Head of caudate nucleus (tissue), 42 donors: ENCODE measurements at regions of chr16 and their contacts with region 1.

Region 1: GRCh38 chr16:86563489-86564345 is 2.9 kb upstream of the FOXC2 start:
- DNase-seq: peak; percentile 80 to 96 (median 91)

Region 2: DNA sequence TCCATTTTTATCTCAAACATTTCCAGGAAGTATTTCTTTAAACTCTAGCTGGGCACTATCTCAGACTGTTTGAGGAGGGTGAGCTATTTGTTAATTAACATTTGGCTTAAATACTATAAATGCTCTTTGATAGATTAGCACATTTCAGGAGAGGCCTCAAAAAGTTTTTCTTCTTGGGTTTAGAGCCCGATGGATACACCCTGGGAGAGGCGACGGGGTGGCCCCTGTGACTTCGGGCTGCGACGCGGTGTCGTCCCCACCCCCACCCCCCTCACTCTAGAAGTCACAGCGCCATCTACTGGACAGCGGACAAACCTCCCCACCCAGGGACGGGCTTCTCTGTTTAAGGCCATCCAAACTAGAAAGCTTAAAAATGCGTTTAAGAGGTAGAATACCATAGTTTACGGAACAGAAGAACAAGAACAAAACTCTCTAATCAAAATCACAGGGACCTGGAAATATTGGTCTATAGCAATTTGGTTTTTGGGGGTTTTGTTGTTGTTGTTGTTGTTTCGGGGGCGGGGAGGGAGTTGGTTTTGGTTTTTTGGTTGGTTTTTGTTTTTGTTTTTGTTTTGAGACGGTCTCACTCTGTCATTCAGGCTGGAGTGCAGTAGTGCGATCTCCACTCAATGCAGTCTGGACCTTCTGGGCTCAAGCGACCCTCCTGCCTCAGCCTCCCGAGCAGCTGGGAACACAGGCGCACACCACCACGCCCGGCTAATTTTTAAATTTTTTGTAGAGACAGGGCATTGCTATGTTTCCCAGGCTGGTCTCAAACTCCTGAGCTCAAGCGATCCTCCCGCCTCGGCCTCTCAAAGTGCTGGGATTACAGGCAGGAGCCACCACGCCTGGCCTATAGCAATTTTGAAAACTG is 499.1 kb after region 1 on chr16:
- intact Hi-C with region 1: loop called (anchors 5 kb)
- DNase-seq: peak; percentile 36 to 87 (median 64)

Region 3: DNA sequence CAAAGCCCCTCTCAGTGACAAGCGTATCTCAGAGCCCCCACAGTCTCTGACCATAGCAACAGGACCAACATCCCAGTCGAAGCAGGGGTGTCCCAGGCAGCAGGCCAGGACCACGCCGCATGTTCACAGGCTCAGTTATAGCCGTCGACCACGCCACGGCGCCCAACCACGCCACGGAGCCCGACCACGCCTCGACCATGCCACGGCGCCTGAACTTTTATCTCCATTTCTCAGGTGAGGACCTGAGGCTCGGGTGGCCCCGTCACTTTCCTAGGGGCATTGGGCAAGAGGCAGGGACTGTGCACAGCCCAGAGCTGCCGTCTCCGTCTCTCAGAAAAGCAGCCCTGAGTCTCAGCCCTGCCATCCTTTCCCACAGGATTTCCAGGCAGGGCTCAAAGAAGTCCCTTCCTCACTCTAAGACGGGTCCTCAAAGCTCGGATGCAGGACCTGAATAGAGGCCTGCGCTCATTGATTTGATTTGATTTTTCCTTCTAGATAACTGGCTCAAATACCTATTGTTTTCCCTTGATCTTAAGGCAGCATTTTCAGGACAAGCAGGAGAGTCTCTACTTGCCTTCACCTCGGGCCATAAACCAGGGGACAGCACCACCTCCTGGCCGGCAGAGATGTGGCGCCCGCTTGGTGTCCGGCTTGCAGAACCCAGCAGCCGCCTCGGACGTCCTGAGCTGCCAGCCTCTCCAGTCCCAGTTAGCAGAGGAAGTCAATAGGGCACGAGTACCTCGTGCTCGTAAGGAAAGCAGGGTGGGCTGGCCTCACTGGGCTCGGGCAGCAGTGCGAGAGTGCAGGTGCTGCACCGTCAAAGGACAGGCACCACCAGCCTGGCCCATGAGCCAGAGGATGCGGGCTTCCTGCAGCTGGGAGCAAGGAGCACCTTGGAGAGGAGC is 714.7 kb after region 1 on chr16:
- intact Hi-C with region 1: loop called (anchors 5 kb)
- DNase-seq: peak; percentile 64 to 89 (median 76)